Activated B cell treated with CpG ODN at 0.5 μM for 24 hours (primary cell): ENCODE measurements at regions of chr17 and their contacts with region 1.

Region 1: GRCh38 chr17:42997984-42998938 is at the start of gene RPL27:
- DNase-seq: peak; percentile 95
- ATAC-seq: peak; percentile 95
- H3K4me3 Mint-ChIP-seq: peak within 1 kb of the TSS; percentile 98
- H3K27ac Mint-ChIP-seq: peak within 1 kb of the TSS; percentile 97
- H3K4me1 Mint-ChIP-seq: peaks cover 31% of the 10 kb centered on the region
- H3K27me3 Mint-ChIP-seq: no peaks in the 10 kb centered on the region
- CTCF ChIP-seq: peak; percentile 78
- total RNA-seq, gene RPL27: 1,189 and 1,266 TPM in 2 replicates

Region 2: DNA sequence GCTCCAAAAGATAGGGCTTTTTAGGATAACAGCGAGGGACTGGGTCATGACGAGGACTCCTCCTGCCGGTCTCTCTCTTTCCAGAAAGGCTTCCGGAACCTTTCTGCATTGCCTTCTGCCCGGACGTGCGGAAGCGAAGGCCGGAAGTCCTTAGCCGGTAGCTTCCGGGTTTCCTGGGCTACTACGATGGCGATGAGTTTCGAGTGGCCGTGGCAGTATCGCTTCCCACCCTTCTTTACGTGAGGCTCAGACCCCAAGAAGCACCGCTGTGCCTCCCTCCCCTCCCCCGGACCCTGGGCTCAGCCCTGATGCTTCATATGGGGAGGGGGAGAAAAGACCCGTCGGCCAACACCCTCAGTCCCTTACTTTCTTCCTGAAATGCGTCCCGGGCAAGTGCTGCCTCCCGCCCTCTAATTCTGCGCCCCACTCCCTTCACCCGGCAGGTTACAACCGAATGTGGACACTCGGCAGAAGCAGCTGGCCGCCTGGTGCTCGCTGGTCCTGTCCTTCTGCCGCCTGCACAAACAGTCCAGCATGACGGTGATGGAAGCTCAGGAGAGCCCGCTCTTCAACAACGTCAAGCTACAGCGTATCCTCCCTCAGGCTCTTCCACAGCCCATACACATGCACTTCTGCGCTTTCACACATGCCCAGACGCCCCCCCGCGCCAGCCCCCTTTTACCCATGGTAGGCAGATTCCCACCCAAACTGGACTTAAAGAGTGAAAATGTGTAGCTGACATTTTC is 224.8 kb before region 1 on chr17 and contains the start of gene VPS25:
- CTCF ChIA-PET with region 1: no interaction called
- POLR2A ChIA-PET with region 1: interaction called, 13 read pairs
- intact Hi-C with region 1: no loop called
- DNase-seq: peak; percentile 71
- ATAC-seq: peak; percentile 92
- H3K4me3 Mint-ChIP-seq: peak within 1 kb of the TSS; percentile 98
- H3K27ac Mint-ChIP-seq: peak within 1 kb of the TSS; percentile 96
- H3K4me1 Mint-ChIP-seq: peaks cover 35% of the 10 kb centered on the region
- H3K27me3 Mint-ChIP-seq: no peaks in the 10 kb centered on the region
- CTCF ChIP-seq: no peak
- total RNA-seq, gene VPS25: 49.7 and 49.8 TPM in 2 replicates

Region 3: DNA sequence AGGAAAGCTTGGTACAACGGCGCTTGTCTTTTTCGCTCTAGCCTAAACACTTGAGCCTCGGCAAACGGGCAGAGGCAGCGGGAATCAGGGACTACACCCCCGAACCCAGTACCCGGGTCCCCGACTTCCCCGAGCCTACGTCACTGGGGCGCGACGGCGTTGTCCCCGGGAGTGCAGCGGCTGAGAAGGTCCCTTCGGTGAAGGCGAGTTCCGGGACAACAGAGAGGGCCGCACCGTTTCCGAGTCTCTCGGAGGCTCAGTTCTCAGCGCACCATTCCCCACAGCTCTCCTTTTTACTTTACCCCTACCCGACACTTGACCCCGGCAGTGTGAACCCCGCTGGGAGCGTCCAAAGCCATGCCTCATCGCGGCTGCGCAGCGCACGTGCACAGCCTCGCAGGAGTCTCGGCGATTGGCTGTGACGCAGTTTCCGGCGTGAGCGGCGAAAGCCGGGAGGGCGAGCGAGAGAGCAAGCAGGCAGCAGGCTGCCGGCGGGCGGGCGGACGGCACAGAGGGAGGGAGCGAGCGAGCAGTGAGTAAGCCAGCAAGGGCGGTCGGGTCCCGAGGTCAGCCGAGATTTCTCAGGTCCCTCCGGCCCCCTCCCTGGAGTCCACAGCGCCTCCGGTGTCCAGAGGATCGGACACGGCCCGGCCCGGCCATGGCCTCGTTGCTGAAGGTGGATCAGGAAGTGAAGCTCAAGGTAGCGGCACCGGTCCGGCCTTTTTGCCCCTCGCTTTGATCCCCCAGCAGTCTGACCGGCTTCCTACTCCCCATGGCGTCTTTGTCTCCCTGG is 165.1 kb before region 1 on chr17 and contains the start of gene PSME3:
- CTCF ChIA-PET with region 1: interaction called, 10 read pairs
- POLR2A ChIA-PET with region 1: interaction called, 23 read pairs
- intact Hi-C with region 1: loop called (anchors 1 kb)
- DNase-seq: peak; percentile 84
- ATAC-seq: peak; percentile 91
- H3K4me3 Mint-ChIP-seq: peak within 1 kb of the TSS; percentile 97
- H3K27ac Mint-ChIP-seq: peak within 1 kb of the TSS; percentile 99
- H3K4me1 Mint-ChIP-seq: peaks cover 24% of the 10 kb centered on the region
- H3K27me3 Mint-ChIP-seq: no peaks in the 10 kb centered on the region
- CTCF ChIP-seq: no peak
- total RNA-seq, gene PSME3: 136 and 141 TPM in 2 replicates

Region 4: DNA sequence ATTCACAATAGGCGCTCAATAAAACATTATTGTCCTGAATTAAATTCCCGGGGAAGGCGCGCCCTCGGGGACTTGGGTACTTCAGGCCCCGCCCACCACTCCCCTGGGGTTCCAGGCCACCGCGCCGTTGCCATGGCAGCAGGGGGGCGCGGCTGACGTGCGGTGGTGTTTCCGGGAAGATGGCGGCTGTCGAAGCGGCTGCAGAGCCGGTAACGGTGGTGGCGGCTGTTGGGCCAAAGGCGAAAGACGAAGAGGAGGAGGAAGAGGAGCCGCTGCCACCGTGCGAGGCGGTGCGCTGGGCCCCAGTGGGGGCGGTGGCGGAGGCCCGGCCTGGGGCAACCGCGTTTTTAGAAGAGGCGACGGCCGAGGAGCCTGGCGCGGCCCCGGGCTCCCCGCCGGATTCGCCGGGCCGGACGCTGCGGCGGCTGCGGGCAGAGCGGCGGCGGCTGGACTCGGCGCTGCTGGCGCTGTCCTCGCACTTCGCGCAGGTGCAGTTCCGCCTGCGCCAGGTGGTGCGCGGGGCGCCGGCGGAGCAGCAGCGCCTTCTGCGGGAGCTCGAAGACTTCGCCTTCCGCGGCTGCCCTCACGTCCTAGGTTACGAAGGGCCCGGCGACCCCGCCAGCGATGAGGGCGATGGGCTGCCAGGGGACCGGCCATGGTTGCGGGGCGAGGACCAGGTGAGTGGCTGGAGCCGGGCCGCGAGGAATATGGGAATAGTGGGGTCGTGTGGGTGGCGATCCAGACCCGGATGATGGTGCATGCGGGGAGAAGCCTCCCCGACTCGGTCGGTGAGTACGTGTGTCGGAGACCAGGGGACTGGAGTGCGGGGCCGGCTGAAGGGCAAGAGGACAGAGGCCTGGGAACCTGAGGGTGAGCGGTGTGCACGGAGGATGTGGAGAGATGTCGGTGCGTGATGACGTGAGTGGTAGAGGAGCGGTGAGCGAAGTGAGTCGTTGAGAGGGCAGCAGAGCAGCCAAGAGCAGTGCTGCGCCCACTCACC is 17.6 kb before region 1 on chr17 and contains the start of gene RUNDC1:
- CTCF ChIA-PET with region 1: interaction called, 19 read pairs
- POLR2A ChIA-PET with region 1: interaction called, 124 read pairs
- intact Hi-C with region 1: loop called (anchors 1 kb)
- DNase-seq: peak; percentile 94
- ATAC-seq: peak; percentile 76
- H3K4me3 Mint-ChIP-seq: peak within 1 kb of the TSS; percentile 99
- H3K27ac Mint-ChIP-seq: peak within 1 kb of the TSS; percentile 98
- H3K4me1 Mint-ChIP-seq: peaks cover 53% of the 10 kb centered on the region
- H3K27me3 Mint-ChIP-seq: no peaks in the 10 kb centered on the region
- CTCF ChIP-seq: no peak
- total RNA-seq, gene RUNDC1: 28.3 and 30.9 TPM in 2 replicates

Region 5: GRCh38 chr17:43170766-43171585 is 172.7 kb after region 1 on chr17 and contains the start of gene NBR1:
- CTCF ChIA-PET with region 1: interaction called, 4 read pairs
- POLR2A ChIA-PET with region 1: interaction called, 20 read pairs
- intact Hi-C with region 1: loop called (anchors 1 kb)
- DNase-seq: peak; percentile 86
- ATAC-seq: peak; percentile 74
- H3K4me3 Mint-ChIP-seq: no peak within 1 kb of the TSS
- H3K27ac Mint-ChIP-seq: no peak within 1 kb of the TSS
- H3K4me1 Mint-ChIP-seq: peaks cover 13% of the 10 kb centered on the region
- H3K27me3 Mint-ChIP-seq: no peaks in the 10 kb centered on the region
- CTCF ChIP-seq: no peak
- total RNA-seq, gene NBR1: 42.2 and 44.8 TPM in 2 replicates

Region 6: DNA sequence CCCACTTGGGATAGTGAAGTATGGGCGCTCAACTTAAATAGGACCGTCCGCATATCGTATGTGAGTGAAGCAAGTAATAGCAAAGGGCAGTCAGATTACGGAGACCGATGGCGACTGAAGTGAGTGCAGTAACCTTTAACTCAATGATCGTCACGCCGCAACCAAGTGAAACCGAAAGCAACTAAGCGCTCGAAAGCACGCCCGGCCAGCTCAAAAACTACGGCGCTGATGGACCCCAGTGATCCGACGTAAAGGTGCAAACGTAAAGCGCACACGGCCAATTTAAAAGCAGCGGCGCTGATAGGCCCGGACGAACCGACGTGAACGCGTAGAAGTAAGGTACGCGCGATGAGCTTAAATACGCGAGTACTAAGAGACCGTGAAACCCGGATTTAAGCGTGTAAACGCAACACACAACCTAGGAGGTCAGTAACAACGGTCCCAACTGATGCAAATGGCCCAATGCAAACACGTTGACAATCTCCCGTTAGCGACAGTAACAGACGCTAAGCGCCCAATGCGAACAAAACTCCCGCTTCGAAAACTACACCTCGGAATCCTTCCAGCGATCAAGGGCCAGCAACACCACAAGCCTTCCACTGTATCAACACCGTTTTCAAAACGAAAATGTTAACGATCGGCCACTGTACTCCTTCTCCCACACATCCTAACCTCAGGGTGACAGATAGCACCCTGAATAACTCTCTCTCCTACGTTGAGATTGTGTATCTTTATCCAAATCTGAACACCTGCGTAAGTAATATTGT is 362.7 kb after region 1 on chr17:
- CTCF ChIA-PET with region 1: no interaction called
- POLR2A ChIA-PET with region 1: interaction called, 10 read pairs
- intact Hi-C with region 1: no loop called
- DNase-seq: peak; percentile 65
- ATAC-seq: peak; percentile 76
- H3K4me3 Mint-ChIP-seq: peak overlapping the region; percentile 93
- H3K27ac Mint-ChIP-seq: peak overlapping the region; percentile 100
- H3K4me1 Mint-ChIP-seq: peaks cover 15% of the 10 kb centered on the region
- H3K27me3 Mint-ChIP-seq: peaks cover 2% of the 10 kb centered on the region
- CTCF ChIP-seq: no peak

Region 7: GRCh38 chr17:43483674-43484372 is 485.6 kb after region 1 on chr17 and contains the start of gene DHX8:
- CTCF ChIA-PET with region 1: no interaction called
- POLR2A ChIA-PET with region 1: interaction called, 15 read pairs
- intact Hi-C with region 1: loop called (anchors 1 kb)
- DNase-seq: peak; percentile 99
- ATAC-seq: peak; percentile 97
- H3K4me3 Mint-ChIP-seq: peak within 1 kb of the TSS; percentile 94
- H3K27ac Mint-ChIP-seq: peak within 1 kb of the TSS; percentile 89
- H3K4me1 Mint-ChIP-seq: peaks cover 36% of the 10 kb centered on the region
- H3K27me3 Mint-ChIP-seq: no peaks in the 10 kb centered on the region
- CTCF ChIP-seq: peak; percentile 98
- total RNA-seq, gene DHX8: 60.6 and 63.4 TPM in 2 replicates